CD4-positive, alpha-beta memory T cell (primary cell): ENCODE measurements at regions of chr13 and their contacts with region 1.

Region 1: GRCh38 chr13:29081036-29081435 is 260.9 kb downstream of the MTUS2 start:
- DNase-seq: peak; percentile 53 to 76 (median 64)
- H3K4me3 ChIP-seq: no peak overlapping the region
- H3K4me3 Mint-ChIP-seq: peak overlapping the region in 3 of 8 donors; percentile 17 to 64 (median 43)
- H3K27ac ChIP-seq: no peak overlapping the region
- H3K27ac Mint-ChIP-seq: peak overlapping the region; percentile 51 to 93 (median 73)
- H3K4me1 ChIP-seq: peaks cover 28% of the 10 kb centered on the region
- H3K4me1 Mint-ChIP-seq: peaks cover 15 to 40% (median 28%) of the 10 kb centered on the region in 4 donors
- H3K27me3 ChIP-seq: no peaks in the 10 kb centered on the region
- H3K27me3 Mint-ChIP-seq: no peaks in the 10 kb centered on the region

Region 2: GRCh38 chr13:28819735-28820098 is 261.3 kb before region 1 on chr13:
- CTCF ChIA-PET with region 1: no interaction called
- POLR2A ChIA-PET with region 1: no interaction called
- intact Hi-C with region 1: loop called (anchors 1 kb)
- DNase-seq: peak in 4 of 5 donors; percentile 45 to 60 (median 50)
- H3K4me3 ChIP-seq: no peak overlapping the region
- H3K4me3 Mint-ChIP-seq: no peak overlapping the region
- H3K27ac ChIP-seq: no peak overlapping the region
- H3K27ac Mint-ChIP-seq: no peak overlapping the region
- H3K4me1 ChIP-seq: peaks cover 5% of the 10 kb centered on the region
- H3K4me1 Mint-ChIP-seq: peaks cover 2 to 7% (median 4%) of the 10 kb centered on the region in 4 donors
- H3K27me3 ChIP-seq: peaks cover 17% of the 10 kb centered on the region
- H3K27me3 Mint-ChIP-seq: peaks cover 36 to 43% of the 10 kb centered on the region in 2 donors

Region 3: GRCh38 chr13:29125191-29125933 is 44.3 kb after region 1 on chr13:
- CTCF ChIA-PET with region 1: interaction called, 3 read pairs
- POLR2A ChIA-PET with region 1: interaction called, 5 read pairs
- intact Hi-C with region 1: loop called (anchors 2 kb)
- DNase-seq: peak; percentile 26 to 58 (median 43)
- H3K4me3 ChIP-seq: no peak overlapping the region
- H3K4me3 Mint-ChIP-seq: peak overlapping the region; percentile 14 to 89 (median 74)
- H3K27ac ChIP-seq: peak overlapping the region; percentile 35
- H3K27ac Mint-ChIP-seq: peak overlapping the region; percentile 69 to 95 (median 91)
- H3K4me1 ChIP-seq: peaks cover 15% of the 10 kb centered on the region
- H3K4me1 Mint-ChIP-seq: peaks cover 5 to 26% (median 15%) of the 10 kb centered on the region in 4 donors
- H3K27me3 ChIP-seq: no peaks in the 10 kb centered on the region
- H3K27me3 Mint-ChIP-seq: no peaks in the 10 kb centered on the region

Region 4: DNA sequence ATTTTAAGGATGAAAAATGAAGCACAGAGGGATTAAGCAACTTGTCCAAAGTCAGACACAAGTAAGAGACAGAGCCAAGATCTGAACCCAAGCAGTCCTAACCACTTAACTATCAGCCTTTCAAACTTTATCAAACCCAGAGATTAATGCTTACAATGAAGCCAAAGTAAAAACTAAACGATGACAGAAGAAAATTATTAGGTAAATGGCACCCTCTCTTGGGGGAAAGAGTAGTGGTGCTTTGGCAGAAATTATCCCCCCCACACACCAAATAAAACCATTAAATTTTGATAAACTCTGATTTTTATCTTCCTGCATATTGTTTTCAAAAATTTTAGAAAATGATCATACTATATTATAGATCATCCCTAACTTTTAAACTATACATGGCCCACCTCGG is 185.2 kb after region 1 on chr13:
- CTCF ChIA-PET with region 1: no interaction called
- POLR2A ChIA-PET with region 1: no interaction called
- intact Hi-C with region 1: loop called (anchors 1 kb)
- DNase-seq: peak in 3 of 5 donors; percentile 1 to 4 (median 2)
- H3K4me3 ChIP-seq: no peak overlapping the region
- H3K4me3 Mint-ChIP-seq: no peak overlapping the region
- H3K27ac ChIP-seq: no peak overlapping the region
- H3K27ac Mint-ChIP-seq: no peak overlapping the region
- H3K4me1 ChIP-seq: no peaks in the 10 kb centered on the region
- H3K4me1 Mint-ChIP-seq: peaks cover 0 to 1% (median 0%) of the 10 kb centered on the region in 4 donors
- H3K27me3 ChIP-seq: no peaks in the 10 kb centered on the region
- H3K27me3 Mint-ChIP-seq: peaks cover 1 to 5% of the 10 kb centered on the region in 2 donors

Region 5: DNA sequence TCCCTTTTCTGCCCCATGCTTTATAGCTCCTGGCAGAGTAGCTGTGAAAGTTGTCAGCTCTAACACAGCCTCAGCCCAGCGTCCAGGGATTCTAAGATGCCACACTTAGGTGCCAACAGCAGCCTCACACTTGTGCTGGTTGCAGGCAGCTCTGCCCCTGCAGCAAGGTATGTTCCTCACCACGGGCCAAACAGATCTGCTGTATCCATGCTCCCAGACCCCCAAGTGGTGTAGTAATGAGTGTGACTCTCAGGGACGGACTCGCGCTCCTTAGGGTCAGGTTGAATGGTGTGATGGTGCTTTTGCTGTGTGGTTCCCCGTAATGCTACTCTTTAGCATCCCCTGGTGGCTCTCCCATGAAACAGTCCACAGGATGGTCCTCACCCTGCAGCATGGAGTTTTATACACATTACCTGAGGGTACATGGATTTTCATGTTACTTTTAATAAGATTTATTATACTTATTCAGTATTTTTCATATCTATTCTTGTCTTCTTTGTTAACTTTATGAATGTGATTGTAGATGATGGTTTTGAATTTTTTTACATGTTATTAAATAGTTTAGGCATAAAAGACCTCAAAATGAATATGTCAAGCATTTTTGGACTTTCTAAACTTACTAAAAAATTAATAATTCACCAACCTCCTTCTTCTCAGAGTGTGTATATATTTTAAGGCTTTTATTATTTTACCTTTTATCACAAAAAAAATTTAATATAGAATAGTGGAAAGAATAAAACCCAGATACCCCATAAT is 282.0 kb after region 1 on chr13:
- CTCF ChIA-PET with region 1: interaction called, 5 read pairs
- POLR2A ChIA-PET with region 1: interaction called, 3 read pairs
- intact Hi-C with region 1: loop called (anchors 1 kb)
- DNase-seq: peak in 4 of 5 donors; percentile 37 to 49 (median 43)
- H3K4me3 ChIP-seq: no peak overlapping the region
- H3K4me3 Mint-ChIP-seq: peak overlapping the region in 5 of 8 donors; percentile 1 to 38 (median 24)
- H3K27ac ChIP-seq: no peak overlapping the region
- H3K27ac Mint-ChIP-seq: peak overlapping the region in 1 of 7 donors; percentile 11
- H3K4me1 ChIP-seq: peaks cover 4% of the 10 kb centered on the region
- H3K4me1 Mint-ChIP-seq: peaks cover 0 to 4% (median 4%) of the 10 kb centered on the region in 4 donors
- H3K27me3 ChIP-seq: no peaks in the 10 kb centered on the region
- H3K27me3 Mint-ChIP-seq: peaks cover 9 to 13% of the 10 kb centered on the region in 2 donors

Region 6: DNA sequence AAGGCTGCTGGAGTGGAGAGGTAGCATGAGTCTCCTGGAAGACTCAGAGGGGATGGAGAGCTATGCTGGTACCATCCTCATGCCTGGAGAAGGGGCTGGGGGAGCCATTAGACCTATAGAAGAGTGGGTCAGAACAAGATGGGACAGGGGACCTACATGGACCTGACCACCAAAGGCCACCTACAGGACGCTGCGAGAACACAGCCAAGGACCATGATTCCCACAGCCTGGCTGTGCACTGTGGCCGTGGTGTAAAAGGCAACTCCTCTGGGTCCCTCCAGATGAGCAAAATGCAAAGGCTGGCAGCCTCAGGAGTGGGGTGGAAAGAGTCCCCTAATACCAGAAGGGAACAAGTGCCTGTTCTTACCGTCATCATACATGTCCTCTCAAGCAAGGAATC is 298.2 kb after region 1 on chr13:
- CTCF ChIA-PET with region 1: no interaction called
- POLR2A ChIA-PET with region 1: no interaction called
- intact Hi-C with region 1: no loop called
- DNase-seq: no peak
- H3K4me3 ChIP-seq: no peak overlapping the region
- H3K4me3 Mint-ChIP-seq: no peak overlapping the region
- H3K27ac ChIP-seq: no peak overlapping the region
- H3K27ac Mint-ChIP-seq: no peak overlapping the region
- H3K4me1 ChIP-seq: no peaks in the 10 kb centered on the region
- H3K4me1 Mint-ChIP-seq: no peaks in the 10 kb centered on the region
- H3K27me3 ChIP-seq: no peaks in the 10 kb centered on the region
- H3K27me3 Mint-ChIP-seq: peaks cover 3 to 6% of the 10 kb centered on the region in 2 donors

Region 7: GRCh38 chr13:29472332-29472961 is 391.4 kb after region 1 on chr13:
- CTCF ChIA-PET with region 1: no interaction called
- POLR2A ChIA-PET with region 1: no interaction called
- intact Hi-C with region 1: loop called (anchors 2 kb)
- DNase-seq: peak in 4 of 5 donors; percentile 16 to 23 (median 22)
- H3K4me3 ChIP-seq: no peak overlapping the region
- H3K4me3 Mint-ChIP-seq: no peak overlapping the region
- H3K27ac ChIP-seq: no peak overlapping the region
- H3K27ac Mint-ChIP-seq: peak overlapping the region in 1 of 7 donors; percentile 20
- H3K4me1 ChIP-seq: no peaks in the 10 kb centered on the region
- H3K4me1 Mint-ChIP-seq: peaks cover 0 to 3% (median under 1%) of the 10 kb centered on the region in 4 donors
- H3K27me3 ChIP-seq: no peaks in the 10 kb centered on the region
- H3K27me3 Mint-ChIP-seq: peaks cover 2 to 3% of the 10 kb centered on the region in 2 donors